Aorta (tissue), 5 donors: ENCODE measurements at regions of chr22 and their contacts with region 1.

Region 1: DNA sequence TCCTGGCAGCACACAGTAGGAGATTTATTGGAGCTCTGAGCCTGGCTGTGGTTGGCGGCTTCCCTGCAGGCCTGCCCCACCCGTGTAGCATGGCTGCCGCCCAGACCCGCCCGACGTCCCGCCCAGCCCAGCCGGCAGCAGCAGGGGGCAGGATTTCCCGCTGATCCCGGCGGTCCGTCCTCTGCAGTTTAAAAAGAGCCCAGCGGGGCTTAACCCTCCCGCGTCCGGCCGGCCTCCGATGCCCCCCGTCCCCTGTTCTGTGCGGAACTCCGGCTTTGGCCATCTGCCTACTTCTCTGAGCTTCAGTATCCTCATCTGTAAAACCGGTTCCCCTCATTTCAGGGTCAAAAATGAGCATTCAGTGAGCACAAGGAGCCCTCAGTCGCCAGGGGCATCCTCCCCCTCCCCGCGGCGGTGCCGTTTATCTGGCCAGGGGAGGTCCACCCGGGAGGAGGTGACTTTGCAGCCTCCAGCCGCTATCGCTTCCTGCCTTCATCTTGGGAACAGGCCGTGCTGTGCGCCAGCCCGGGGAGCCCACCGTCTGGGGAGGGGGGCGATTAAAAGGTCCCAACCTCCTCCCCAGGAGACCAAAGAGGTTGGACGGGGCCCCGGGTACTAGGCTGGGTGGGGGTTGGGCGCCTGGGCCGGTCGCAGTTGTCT is at the start of gene GAS2L1:
- DNase-seq: peak; percentile 93 to 94
- ATAC-seq: peak; percentile 84
- H3K4me3 ChIP-seq: peak within 1 kb of the TSS; percentile 77 to 92
- H3K27ac ChIP-seq: peak within 1 kb of the TSS in 1 of 2 donors; percentile 61
- H3K4me1 ChIP-seq: no peaks in the 10 kb centered on the region
- H3K27me3 ChIP-seq: no peaks in the 10 kb centered on the region
- total RNA-seq, gene GAS2L1: 21.0 to 22.3 TPM

Region 2: DNA sequence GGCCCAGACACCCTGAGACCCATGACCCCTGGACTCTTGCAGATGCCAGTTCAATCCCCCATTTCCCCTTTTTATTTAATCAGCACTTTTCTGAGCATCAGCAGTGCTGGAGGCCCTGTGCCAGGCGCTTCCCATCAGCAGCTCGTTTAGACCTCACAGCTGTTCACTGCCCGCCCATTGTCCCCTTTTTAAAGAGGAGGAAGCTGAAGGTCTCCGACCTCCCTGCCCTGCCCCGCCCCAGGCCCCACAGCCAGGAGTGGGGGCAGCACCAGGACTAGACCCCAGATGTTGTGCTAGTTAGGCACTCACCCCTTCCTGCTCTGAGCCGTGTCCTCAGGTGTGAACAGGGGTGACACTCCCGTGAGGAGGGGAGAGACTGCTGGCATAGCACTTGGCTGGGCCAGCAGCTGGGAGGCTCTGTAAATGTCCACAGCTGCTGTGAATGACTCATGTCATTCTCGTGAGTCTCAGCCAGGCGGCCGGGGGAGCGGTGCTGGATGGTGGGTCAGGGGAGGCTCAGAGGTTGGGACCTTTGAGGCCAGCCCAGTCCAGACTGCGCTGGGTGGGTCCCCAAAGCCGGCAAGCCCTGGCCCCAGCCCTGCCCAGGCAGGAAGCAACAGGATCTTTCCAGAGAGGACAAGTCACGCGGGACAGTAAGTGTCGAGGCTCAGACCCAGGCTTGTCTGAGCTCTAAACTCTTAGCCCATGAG is 80.7 kb before region 1 on chr22:
- intact Hi-C with region 1: no loop called
- DNase-seq: peak; percentile 83
- ATAC-seq: peak; percentile 58
- H3K4me3 ChIP-seq: no peak overlapping the region
- H3K27ac ChIP-seq: no peak overlapping the region
- H3K4me1 ChIP-seq: no peaks in the 10 kb centered on the region
- H3K27me3 ChIP-seq: no peaks in the 10 kb centered on the region

Region 3: GRCh38 chr22:29267858-29268417 is 38.4 kb before region 1 on chr22 and contains the starts of genes EWSR1 and RHBDD3:
- intact Hi-C with region 1: loop called (anchors 2 to 5 kb)
- DNase-seq: peak; percentile 98
- ATAC-seq: peak; percentile 96
- H3K4me3 ChIP-seq: peak within 1 kb of the TSS; percentile 79 to 86
- H3K27ac ChIP-seq: peak within 1 kb of the TSS; percentile 71 to 94
- H3K4me1 ChIP-seq: peaks cover 1 to 2% of the 10 kb centered on the region in 2 donors
- H3K27me3 ChIP-seq: no peaks in the 10 kb centered on the region
- total RNA-seq, gene EWSR1: 176 to 184 TPM
- total RNA-seq, gene RHBDD3: 9.0 to 17.4 TPM

Region 4: GRCh38 chr22:29291215-29291614 is 15.1 kb before region 1 on chr22:
- intact Hi-C with region 1: no loop called
- DNase-seq: no peak
- ATAC-seq: no peak
- H3K4me3 ChIP-seq: no peak overlapping the region
- H3K27ac ChIP-seq: no peak overlapping the region
- H3K4me1 ChIP-seq: no peaks in the 10 kb centered on the region
- H3K27me3 ChIP-seq: no peaks in the 10 kb centered on the region

Region 5: DNA sequence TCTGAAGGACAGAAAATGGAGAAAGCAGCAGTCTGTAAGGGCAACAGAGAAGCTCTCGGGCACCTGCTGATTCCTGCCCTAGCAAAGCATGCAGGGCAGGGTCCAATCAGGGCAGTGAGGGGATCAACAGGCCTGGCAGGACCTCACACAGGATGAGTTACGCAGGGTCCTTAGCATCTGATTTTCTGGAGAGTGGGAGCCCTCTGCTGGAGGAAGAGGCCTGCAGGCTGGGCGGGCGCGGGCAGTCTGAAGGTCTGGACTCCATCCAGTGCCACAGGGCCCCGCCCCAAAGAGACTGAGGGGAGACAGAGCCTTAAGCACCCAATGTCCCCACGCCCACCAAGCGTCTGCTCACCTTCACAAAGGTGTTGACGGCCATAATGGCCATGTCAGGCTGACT is 53.2 kb after region 1 on chr22:
- intact Hi-C with region 1: loop called in 1 of 2 experiments (anchors 5 kb)
- DNase-seq: peak in 1 of 2 donors; percentile 57
- ATAC-seq: peak; percentile 72
- H3K4me3 ChIP-seq: no peak overlapping the region
- H3K27ac ChIP-seq: no peak overlapping the region
- H3K4me1 ChIP-seq: no peaks in the 10 kb centered on the region
- H3K27me3 ChIP-seq: no peaks in the 10 kb centered on the region

Region 6: DNA sequence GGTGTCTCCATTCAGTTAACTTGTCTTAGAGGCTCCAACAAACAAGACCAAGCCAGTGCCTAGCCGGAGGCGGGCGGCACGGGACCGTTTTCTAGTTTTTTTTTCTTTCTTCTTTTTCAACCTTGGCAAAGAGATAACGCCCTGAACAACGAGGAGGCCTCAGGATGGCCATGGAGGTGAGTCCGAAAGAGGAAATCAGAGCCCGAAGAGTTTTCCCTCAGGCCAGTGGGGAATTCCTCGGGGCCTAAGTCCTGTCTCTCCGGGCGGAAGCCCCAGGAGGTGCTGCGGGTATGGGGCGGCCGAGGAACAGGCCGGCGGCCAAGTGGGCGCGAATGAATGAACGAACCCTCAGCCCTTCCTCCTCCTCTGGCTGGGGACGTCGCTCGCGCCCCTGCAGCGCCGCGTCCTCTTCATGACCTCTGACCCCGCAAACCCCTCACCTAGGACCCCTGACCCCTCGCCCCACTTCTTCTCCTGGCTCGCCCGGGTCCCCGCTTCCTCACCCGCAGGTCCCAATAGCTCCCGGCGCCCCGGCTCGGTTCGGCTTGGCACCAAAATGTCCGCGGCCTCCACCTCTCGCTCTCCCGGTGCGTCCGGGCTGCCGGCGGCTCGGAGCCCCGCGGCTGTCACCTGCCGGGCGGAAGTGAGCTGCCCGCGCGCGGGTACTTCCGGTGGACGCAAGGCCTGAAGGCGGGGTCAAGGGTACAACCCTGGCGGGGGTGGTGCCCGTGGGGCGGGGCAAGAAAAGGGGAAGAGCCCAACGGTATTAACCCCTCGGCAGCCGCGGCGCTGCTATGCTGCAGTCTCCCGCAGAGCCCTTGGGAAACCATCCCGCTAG is 81.8 kb after region 1 on chr22 and contains the start of gene AP1B1:
- intact Hi-C with region 1: loop called in 1 of 2 experiments (anchors 5 kb)
- DNase-seq: peak; percentile 97 to 99
- ATAC-seq: peak; percentile 93
- H3K4me3 ChIP-seq: peak within 1 kb of the TSS; percentile 64 to 73
- H3K27ac ChIP-seq: peak within 1 kb of the TSS in 1 of 2 donors; percentile 35
- H3K4me1 ChIP-seq: no peaks in the 10 kb centered on the region
- H3K27me3 ChIP-seq: no peaks in the 10 kb centered on the region
- total RNA-seq, gene AP1B1: 65.7 to 71.9 TPM